Calu3 (cell line): ENCODE measurements at regions of chr3 and their contacts with region 1.

Region 1: DNA sequence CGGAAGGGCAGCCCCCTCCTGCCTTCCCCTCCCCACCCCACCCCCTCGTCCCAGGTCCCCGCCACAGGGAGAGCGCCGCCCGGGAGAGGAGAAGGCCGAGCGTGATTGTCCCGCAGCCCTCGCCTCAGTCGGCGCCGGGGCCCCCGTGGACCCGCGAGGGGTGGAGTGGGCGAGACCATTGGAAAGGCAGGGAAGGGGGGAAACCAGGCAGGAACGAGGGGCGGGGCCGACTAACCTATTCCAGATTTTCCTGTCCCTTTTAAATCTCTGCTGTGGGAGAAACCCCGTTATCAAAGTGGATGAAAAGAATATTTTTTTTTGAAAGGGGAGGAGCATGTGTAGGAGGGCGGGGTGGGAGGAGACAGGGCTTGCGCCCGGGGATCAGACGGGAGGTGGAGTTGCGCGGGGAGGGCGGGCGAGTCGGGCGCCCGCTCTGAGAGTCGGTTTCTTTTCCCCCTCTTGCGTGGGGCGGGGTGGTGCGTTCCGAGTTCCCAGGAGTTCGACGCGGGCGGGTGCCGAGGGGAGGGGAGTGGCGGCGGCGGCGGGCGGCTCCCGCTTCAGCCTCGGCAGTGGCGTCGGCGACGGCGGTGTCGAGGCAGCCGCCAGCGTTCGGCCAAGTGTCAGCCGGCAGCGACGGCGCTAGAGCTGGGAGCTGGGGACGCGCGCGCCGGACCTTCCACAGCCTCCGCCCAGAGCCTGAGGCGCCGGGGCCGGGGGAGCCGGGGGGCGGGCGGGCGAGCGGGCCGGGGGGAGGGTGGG is at the start of gene NECTIN3:
- DNase-seq: peak; percentile 95
- H3K4me3 Mint-ChIP-seq: peak within 1 kb of the TSS; percentile 86
- H3K27ac Mint-ChIP-seq: peak within 1 kb of the TSS; percentile 89
- H3K4me1 Mint-ChIP-seq: peaks cover 12% of the 10 kb centered on the region
- H3K27me3 Mint-ChIP-seq: no peaks in the 10 kb centered on the region
- CTCF ChIP-seq: no peak
- total RNA-seq, gene NECTIN3: 110 and 128 TPM in 2 replicates

Region 2: DNA sequence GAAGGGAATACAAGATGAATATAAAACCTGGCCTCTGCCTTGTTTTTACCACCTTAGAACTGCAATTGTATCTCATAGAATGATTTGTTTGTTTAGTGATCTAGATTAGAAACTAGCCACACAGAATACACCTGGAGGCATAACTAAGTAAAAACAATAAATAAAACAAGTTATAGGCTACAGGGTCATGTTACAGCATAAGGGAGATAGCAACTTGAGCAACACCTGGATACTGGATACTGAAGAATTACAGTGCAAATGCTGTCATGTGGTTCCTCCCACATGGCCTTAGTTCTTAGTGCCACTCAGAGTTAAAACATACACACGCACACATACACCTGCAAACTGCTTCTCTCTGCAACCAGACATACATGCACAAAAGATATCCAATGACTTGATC is 1170.7 kb before region 1 on chr3:
- CTCF ChIA-PET with region 1: interaction called, 12 read pairs
- intact Hi-C with region 1: no loop called
- DNase-seq: no peak
- H3K4me3 Mint-ChIP-seq: no peak overlapping the region
- H3K27ac Mint-ChIP-seq: peak overlapping the region; percentile 36
- H3K4me1 Mint-ChIP-seq: peaks cover 36% of the 10 kb centered on the region
- H3K27me3 Mint-ChIP-seq: no peaks in the 10 kb centered on the region
- CTCF ChIP-seq: no peak

Region 3: GRCh38 chr3:110413807-110414748 is 657.4 kb before region 1 on chr3:
- CTCF ChIA-PET with region 1: no interaction called
- intact Hi-C with region 1: loop called (anchors 10 kb)
- DNase-seq: no peak
- H3K4me3 Mint-ChIP-seq: no peak overlapping the region
- H3K27ac Mint-ChIP-seq: peak overlapping the region; percentile 89
- H3K4me1 Mint-ChIP-seq: peaks cover 34% of the 10 kb centered on the region
- H3K27me3 Mint-ChIP-seq: no peaks in the 10 kb centered on the region
- CTCF ChIP-seq: no peak

Region 4: DNA sequence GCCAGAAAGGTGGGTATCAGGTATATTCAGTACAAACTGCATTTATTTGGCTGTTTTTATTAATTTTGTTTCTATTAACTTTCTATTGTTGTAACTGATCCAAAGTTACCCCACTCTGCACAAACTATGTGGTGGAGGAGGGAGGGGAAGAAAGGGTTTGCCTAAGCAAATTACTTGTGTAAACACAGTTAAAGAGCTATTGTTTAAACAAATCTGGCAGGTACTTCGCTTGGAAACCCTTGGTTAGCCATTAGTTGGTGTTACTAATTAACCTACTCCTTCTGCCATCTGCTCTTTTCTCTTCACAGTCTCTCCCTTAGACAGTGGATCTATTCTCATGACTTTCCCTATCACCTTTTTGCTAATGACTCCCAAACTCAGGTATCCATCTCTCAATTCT is 328.2 kb before region 1 on chr3:
- CTCF ChIA-PET with region 1: no interaction called
- intact Hi-C with region 1: loop called (anchors 10 kb)
- DNase-seq: peak; percentile 30
- H3K4me3 Mint-ChIP-seq: peak overlapping the region; percentile 10
- H3K27ac Mint-ChIP-seq: peak overlapping the region; percentile 14
- H3K4me1 Mint-ChIP-seq: peaks cover 22% of the 10 kb centered on the region
- H3K27me3 Mint-ChIP-seq: no peaks in the 10 kb centered on the region
- CTCF ChIP-seq: no peak

Region 5: DNA sequence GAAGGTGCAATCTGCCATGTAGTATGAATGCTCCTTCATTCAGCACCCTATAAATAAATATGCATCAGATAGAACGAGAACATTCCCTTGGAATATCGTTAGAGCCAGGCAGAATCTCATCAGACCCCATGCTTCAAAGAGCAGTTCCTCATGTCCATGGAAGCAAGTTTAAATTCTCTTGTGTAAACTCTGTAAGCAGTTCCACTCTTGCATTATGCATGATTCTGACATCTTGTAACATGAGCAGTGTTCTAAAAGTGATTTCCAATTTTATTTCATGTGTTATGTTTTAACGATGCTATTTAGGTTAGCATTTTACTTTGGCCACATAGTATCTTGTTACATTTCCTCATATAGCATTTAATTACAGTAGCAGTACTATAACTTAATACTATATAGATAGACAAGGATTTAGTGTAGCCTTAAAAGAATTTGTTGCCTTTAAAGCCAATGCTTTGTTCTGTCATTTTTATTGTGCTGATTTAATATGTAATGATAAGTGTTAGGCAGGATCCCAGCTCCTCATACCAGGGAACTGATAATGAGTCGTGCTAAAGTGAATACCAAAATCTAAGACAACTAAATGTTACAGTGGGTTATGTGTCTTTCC is 161.0 kb before region 1 on chr3:
- CTCF ChIA-PET with region 1: no interaction called
- intact Hi-C with region 1: no loop called
- DNase-seq: no peak
- H3K4me3 Mint-ChIP-seq: no peak overlapping the region
- H3K27ac Mint-ChIP-seq: no peak overlapping the region
- H3K4me1 Mint-ChIP-seq: peaks cover 20% of the 10 kb centered on the region
- H3K27me3 Mint-ChIP-seq: no peaks in the 10 kb centered on the region
- CTCF ChIP-seq: no peak

Region 6: DNA sequence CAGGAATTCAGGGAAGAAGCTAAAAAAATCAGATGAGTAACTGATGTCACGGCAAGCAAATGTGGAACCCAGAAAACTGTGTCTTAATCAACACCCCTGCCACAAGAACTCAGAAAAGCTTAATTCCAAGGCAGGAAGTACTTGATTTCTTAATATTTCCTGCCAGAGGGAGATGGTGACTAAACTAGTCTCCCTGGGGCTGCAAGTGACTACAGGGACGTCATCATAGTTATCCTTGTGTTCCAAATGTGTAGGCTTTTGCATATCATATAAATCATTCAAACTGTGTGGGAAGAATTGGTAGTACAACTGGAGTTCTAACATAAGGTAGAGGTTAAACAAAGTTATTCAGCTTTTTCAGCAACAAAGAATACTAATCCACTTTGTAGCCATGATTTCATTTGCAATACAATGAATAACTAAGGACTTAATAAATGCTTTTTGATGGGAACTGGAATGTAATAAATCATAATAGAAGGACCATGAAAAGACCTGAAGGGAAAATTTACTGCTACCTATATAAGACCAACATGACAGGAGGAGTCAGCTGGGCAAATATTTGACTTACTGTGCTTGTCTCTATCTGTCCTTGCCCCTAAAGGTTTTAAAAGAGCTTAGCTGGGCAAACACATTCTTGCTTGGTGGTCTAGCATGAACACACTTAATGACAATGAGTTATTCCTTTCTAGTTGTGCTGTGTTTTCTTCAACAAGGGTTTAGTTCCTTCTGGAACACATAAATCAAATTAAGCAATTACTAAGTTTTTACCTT is 75.8 kb before region 1 on chr3:
- CTCF ChIA-PET with region 1: no interaction called
- intact Hi-C with region 1: no loop called
- DNase-seq: no peak
- H3K4me3 Mint-ChIP-seq: no peak overlapping the region
- H3K27ac Mint-ChIP-seq: no peak overlapping the region
- H3K4me1 Mint-ChIP-seq: no peaks in the 10 kb centered on the region
- H3K27me3 Mint-ChIP-seq: no peaks in the 10 kb centered on the region
- CTCF ChIP-seq: no peak

Region 7: GRCh38 chr3:111087924-111088469 is 16.6 kb after region 1 on chr3:
- CTCF ChIA-PET with region 1: no interaction called
- intact Hi-C with region 1: loop called (anchors 2 kb)
- DNase-seq: peak; percentile 16
- H3K4me3 Mint-ChIP-seq: peak overlapping the region; percentile 15
- H3K27ac Mint-ChIP-seq: peak overlapping the region; percentile 87
- H3K4me1 Mint-ChIP-seq: peaks cover 39% of the 10 kb centered on the region
- H3K27me3 Mint-ChIP-seq: no peaks in the 10 kb centered on the region
- CTCF ChIP-seq: no peak

Region 8: DNA sequence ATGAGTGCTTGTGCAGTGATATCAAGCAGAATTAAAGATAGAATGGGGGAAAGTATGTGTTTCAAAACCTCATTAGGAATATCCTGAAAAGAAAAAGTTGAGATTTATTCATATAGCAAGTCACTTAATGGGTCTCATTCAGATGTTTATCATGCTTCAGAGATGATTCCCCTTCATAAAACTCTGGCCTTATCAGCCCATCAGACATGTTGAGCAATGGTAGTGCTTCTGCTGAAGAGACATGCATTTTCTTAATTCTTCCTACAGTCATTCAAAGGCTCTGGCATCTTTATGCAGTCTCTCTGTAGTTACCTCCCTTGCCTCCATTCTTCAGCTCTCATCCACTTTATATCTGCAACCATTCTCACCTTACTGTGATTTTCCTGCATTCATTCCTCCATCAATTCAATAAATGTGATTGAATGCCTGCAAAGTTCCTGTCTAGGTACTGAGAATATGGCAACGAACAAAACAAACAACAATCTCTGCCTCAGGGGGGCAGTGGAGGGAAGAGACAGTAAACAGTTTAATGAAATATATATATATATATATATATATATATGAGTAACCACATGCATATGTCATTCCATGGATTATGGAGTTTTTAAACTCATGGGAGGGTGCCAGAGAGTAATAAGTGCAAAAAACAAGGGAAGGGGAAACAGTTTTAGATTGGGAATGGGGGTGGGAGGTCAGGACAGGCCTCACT is 138.7 kb after region 1 on chr3:
- CTCF ChIA-PET with region 1: no interaction called
- intact Hi-C with region 1: no loop called
- DNase-seq: no peak
- H3K4me3 Mint-ChIP-seq: no peak overlapping the region
- H3K27ac Mint-ChIP-seq: no peak overlapping the region
- H3K4me1 Mint-ChIP-seq: no peaks in the 10 kb centered on the region
- H3K27me3 Mint-ChIP-seq: no peaks in the 10 kb centered on the region
- CTCF ChIP-seq: no peak

Region 9: DNA sequence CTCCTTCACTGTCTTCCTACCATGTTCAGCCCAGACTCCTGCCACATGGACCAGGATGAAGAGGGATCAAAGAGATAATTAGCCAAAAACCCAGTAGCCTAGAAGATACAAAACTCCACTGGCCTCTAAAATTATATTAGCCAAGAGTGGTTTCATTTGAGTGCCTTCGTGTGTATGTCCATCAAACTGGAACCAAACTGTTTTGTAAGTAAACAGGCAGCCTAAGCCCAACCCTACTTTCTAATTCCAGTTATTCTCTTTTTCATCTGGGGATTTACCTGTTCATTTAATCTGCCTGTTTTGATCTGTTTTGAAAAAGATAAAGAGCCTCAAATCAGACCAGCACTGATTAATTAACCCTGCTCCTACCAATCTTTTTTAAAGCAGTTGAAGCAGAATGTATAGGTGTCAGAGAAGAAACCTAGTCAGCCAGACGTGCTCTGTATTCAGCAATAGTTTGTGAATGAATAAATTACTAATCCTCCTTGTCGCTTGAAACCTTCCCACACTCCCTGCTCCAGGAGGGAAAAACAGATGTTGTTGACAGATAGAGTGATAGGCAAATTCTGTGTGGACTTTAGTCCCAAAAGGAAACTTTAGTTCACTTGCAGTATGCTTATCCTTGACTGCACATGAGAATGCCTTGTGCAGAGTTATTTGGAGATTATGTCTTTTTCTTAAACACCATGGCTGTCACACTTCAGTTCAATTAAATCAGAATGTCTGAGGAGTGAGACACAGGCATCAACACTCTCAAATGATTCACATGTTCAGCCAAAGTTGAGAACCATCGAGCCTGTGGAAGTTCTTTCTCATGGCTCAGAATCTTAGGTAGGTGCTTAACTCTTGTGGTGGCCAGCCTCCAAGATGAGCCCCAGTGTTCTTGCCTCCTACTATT is 579.2 kb after region 1 on chr3:
- CTCF ChIA-PET with region 1: no interaction called
- intact Hi-C with region 1: no loop called
- DNase-seq: no peak
- H3K4me3 Mint-ChIP-seq: no peak overlapping the region
- H3K27ac Mint-ChIP-seq: no peak overlapping the region
- H3K4me1 Mint-ChIP-seq: no peaks in the 10 kb centered on the region
- H3K27me3 Mint-ChIP-seq: no peaks in the 10 kb centered on the region
- CTCF ChIP-seq: no peak